ENCODE measurements at regions of chr6 and their contacts with region 1.

Region 1: DNA sequence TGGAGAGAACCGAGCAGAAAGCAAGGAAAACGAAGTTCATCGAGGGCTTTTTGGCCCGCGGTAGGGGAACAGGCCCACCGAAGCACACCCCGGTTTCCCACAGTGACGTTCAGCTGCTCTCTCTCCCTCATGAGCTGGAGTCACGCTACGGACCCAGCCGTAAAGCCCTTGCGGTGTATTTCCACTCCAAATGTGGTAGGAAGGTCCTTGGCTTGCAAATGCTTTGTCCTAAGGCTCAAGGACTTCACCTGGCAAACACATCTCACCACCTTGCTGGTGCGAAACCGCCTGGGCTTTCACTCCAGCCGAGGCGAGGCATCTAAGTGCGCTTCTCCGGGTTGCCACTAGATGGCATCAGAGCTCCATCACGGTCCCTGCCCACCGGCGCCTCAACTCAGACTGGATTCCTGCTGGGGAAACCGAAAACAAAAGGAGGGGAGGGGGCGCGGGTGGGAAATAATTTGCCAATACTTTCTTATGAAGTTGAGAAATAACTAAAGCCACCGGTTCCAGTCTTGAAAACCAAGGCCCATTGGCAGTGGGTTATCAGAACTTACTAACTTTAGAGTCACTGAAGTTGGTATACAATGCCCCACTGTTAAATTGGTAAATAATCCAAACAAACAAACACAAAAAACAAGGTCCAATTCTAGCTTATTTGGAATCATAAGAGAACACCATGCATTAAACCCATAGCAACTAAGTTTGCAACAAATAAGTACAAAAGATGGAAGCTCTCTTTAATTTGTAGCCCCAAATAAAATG is 13.4 kb upstream of the FOXC1 start:
- DNase-seq: peak; percentile 60 to 78
- H3K4me3 ChIP-seq: no peak overlapping the region
- H3K4me3 Mint-ChIP-seq: peak overlapping the region; percentile 23
- H3K27ac Mint-ChIP-seq: no peak overlapping the region
- H3K4me1 ChIP-seq: peaks cover 21% of the 10 kb centered on the region
- H3K4me1 Mint-ChIP-seq: peaks cover 17% of the 10 kb centered on the region
- H3K27me3 ChIP-seq: no peaks in the 10 kb centered on the region
- H3K27me3 Mint-ChIP-seq: peaks cover 5% of the 10 kb centered on the region
- CTCF ChIP-seq: peak; percentile 85 to 94

Region 2: GRCh38 chr6:1524040-1524480 is 72.2 kb before region 1 on chr6:
- CTCF ChIA-PET with region 1: interaction called, 4 read pairs
- POLR2A ChIA-PET with region 1: no interaction called
- intact Hi-C with region 1: loop called (anchors 5 kb)
- DNase-seq: peak; percentile 92 to 95
- H3K4me3 ChIP-seq: peak overlapping the region; percentile 37
- H3K4me3 Mint-ChIP-seq: peak overlapping the region; percentile 83
- H3K27ac Mint-ChIP-seq: peak overlapping the region; percentile 95
- H3K4me1 ChIP-seq: no peaks in the 10 kb centered on the region
- H3K4me1 Mint-ChIP-seq: no peaks in the 10 kb centered on the region
- H3K27me3 ChIP-seq: no peaks in the 10 kb centered on the region
- H3K27me3 Mint-ChIP-seq: peaks cover 20% of the 10 kb centered on the region
- CTCF ChIP-seq: peak; percentile 86 to 87

Region 3: DNA sequence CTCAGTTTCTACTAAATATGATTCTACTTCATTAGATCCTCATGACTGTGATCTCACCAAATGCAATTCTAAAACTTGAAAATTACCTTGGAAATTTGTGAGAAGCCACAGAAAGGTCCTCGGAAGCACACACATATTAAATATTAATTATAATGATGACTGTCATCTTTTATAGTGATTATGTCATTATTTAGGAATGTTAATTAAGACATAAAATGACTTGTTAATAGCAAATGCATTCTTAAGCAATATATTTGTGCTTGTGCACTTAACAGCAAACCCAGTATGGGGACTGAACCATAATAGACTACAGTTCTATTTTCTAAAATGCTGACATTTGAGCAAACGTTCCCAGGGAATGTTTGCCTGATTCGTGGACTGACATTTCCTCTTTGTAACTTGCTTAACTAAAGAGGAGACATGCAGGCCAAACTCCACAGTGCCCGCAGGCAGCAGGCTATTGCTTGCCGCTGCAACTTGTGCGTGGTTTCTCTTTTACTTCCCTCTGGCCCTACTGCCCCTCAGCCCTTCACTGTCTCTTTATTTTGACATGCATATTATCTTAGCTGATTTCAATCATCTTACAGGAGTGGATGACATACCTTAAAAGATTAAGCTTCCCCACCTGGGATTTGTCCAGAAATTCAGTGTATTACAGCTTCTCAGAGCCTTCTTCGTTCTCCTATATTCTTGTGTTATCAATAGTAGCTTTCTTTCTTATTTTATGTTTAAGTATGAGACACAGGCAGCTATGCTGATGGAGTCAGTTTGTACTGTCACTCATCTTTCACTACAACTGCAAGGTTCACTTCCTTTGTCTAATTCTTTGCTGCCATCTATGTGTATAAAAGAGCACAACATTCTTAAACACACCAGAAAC is 507.6 kb after region 1 on chr6:
- CTCF ChIA-PET with region 1: interaction called, 9 read pairs
- POLR2A ChIA-PET with region 1: no interaction called
- intact Hi-C with region 1: loop called (anchors 2 kb)
- DNase-seq: peak in 1 of 2 experiments; percentile 34
- H3K4me3 ChIP-seq: no peak overlapping the region
- H3K4me3 Mint-ChIP-seq: no peak overlapping the region
- H3K27ac Mint-ChIP-seq: no peak overlapping the region
- H3K4me1 ChIP-seq: no peaks in the 10 kb centered on the region
- H3K4me1 Mint-ChIP-seq: peaks cover 7% of the 10 kb centered on the region
- H3K27me3 ChIP-seq: no peaks in the 10 kb centered on the region
- H3K27me3 Mint-ChIP-seq: no peaks in the 10 kb centered on the region
- CTCF ChIP-seq: peak in 1 of 2 experiments; percentile 58

Region 4: GRCh38 chr6:2196079-2196679 is 599.9 kb after region 1 on chr6:
- CTCF ChIA-PET with region 1: no interaction called
- POLR2A ChIA-PET with region 1: no interaction called
- intact Hi-C with region 1: loop called (anchors 1 kb)
- DNase-seq: peak in 1 of 2 experiments; percentile 42
- H3K4me3 ChIP-seq: no peak overlapping the region
- H3K4me3 Mint-ChIP-seq: no peak overlapping the region
- H3K27ac Mint-ChIP-seq: no peak overlapping the region
- H3K4me1 ChIP-seq: no peaks in the 10 kb centered on the region
- H3K4me1 Mint-ChIP-seq: no peaks in the 10 kb centered on the region
- H3K27me3 ChIP-seq: no peaks in the 10 kb centered on the region
- H3K27me3 Mint-ChIP-seq: no peaks in the 10 kb centered on the region
- CTCF ChIP-seq: peak; percentile 66 to 71

Region 5: DNA sequence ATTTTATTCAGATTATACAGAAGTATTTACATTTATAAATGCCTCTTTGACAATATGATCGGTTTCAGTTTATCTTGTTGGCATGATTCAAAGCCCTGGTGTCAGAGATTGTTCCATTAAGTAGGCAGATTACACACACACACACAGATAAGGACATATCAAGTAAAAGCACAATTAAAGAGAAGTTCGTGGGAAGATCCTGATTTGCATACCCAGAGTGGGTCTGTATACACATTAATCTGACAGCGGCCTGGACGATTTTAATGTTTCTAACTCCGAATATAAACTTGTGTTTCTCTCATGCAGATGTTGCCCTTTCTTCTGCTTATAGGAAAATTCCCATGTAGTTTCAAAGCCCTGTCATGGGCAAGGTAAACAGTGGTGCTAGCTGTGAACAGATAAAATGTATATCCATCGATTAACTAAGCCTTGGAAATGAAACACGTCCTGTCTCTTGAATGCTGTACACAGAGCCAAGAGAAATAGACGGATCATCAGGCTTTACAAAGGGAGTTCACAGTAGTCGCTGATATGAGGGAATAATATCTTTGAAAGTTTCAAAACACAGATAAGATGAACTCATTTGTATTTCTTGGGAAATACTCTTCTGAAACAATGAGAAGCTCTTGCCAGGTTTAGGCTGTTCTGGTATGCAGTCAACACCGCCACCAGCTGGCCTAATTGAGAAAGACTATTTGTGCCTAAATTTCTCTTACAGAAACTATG is 757.3 kb after region 1 on chr6:
- CTCF ChIA-PET with region 1: interaction called, 3 read pairs
- POLR2A ChIA-PET with region 1: no interaction called
- intact Hi-C with region 1: loop called (anchors 2 kb)
- DNase-seq: peak; percentile 61 to 75
- H3K4me3 ChIP-seq: no peak overlapping the region
- H3K4me3 Mint-ChIP-seq: no peak overlapping the region
- H3K27ac Mint-ChIP-seq: no peak overlapping the region
- H3K4me1 ChIP-seq: peaks cover 7% of the 10 kb centered on the region; the same call in 1 of the 2 replicates
- H3K4me1 Mint-ChIP-seq: peaks cover 8% of the 10 kb centered on the region
- H3K27me3 ChIP-seq: no peaks in the 10 kb centered on the region
- H3K27me3 Mint-ChIP-seq: no peaks in the 10 kb centered on the region
- CTCF ChIP-seq: peak; percentile 75 to 79

Measured in Caco-2 (cell line).